CD8-positive, alpha-beta memory T cell (primary cell): ENCODE measurements at regions of chr14 and their contacts with region 1.

Region 1: GRCh38 chr14:99192028-99192621 is 79.9 kb downstream of the BCL11B start:
- DNase-seq: peak in 2 of 5 donors; percentile 59 to 60
- H3K4me3 ChIP-seq: peak overlapping the region; percentile 63
- H3K4me3 Mint-ChIP-seq: peak overlapping the region; percentile 83 to 95 (median 88)
- H3K27ac ChIP-seq: peak overlapping the region; percentile 68
- H3K27ac Mint-ChIP-seq: peak overlapping the region; percentile 94 to 98 (median 96)
- H3K4me1 ChIP-seq: peaks cover 97% of the 10 kb centered on the region
- H3K4me1 Mint-ChIP-seq: peaks cover 93 to 100% (median 98%) of the 10 kb centered on the region in 3 donors
- H3K27me3 ChIP-seq: no peaks in the 10 kb centered on the region
- H3K27me3 Mint-ChIP-seq: peaks cover 0 to 9% of the 10 kb centered on the region in 2 donors

Region 2: DNA sequence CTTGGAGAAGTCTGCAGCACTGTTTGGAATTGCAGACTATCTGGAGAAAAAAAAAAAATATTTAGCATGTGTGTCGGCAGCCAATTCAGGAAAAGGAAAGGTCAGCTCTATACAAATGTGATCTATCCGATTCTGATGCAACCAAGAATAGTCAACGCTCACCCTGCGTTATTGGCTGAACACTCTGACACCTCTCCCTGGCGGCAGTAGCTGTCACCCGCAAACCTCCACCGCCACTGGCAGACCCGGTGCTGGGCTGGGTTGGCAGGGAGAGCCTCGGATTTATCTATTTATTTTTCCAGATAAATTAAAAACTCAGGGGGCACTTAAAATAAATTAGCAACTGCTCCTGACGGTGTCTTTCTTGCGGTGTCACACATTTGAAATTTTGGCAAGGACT is 1985.2 kb before region 1 on chr14:
- CTCF ChIA-PET with region 1: no interaction called
- POLR2A ChIA-PET with region 1: interaction called, 14 read pairs
- DNase-seq: no peak
- H3K4me3 ChIP-seq: no peak overlapping the region
- H3K4me3 Mint-ChIP-seq: no peak overlapping the region
- H3K27ac ChIP-seq: no peak overlapping the region
- H3K27ac Mint-ChIP-seq: no peak overlapping the region
- H3K4me1 ChIP-seq: no peaks in the 10 kb centered on the region
- H3K4me1 Mint-ChIP-seq: no peaks in the 10 kb centered on the region
- H3K27me3 ChIP-seq: no peaks in the 10 kb centered on the region
- H3K27me3 Mint-ChIP-seq: peaks cover 7 to 25% of the 10 kb centered on the region in 2 donors

Region 3: GRCh38 chr14:98651042-98651441 is 541.1 kb before region 1 on chr14:
- CTCF ChIA-PET with region 1: no interaction called
- POLR2A ChIA-PET with region 1: no interaction called
- DNase-seq: no peak
- H3K4me3 ChIP-seq: no peak overlapping the region
- H3K4me3 Mint-ChIP-seq: no peak overlapping the region
- H3K27ac ChIP-seq: no peak overlapping the region
- H3K27ac Mint-ChIP-seq: no peak overlapping the region
- H3K4me1 ChIP-seq: no peaks in the 10 kb centered on the region
- H3K4me1 Mint-ChIP-seq: no peaks in the 10 kb centered on the region
- H3K27me3 ChIP-seq: no peaks in the 10 kb centered on the region
- H3K27me3 Mint-ChIP-seq: peaks cover 0 to 2% of the 10 kb centered on the region in 2 donors

Region 4: DNA sequence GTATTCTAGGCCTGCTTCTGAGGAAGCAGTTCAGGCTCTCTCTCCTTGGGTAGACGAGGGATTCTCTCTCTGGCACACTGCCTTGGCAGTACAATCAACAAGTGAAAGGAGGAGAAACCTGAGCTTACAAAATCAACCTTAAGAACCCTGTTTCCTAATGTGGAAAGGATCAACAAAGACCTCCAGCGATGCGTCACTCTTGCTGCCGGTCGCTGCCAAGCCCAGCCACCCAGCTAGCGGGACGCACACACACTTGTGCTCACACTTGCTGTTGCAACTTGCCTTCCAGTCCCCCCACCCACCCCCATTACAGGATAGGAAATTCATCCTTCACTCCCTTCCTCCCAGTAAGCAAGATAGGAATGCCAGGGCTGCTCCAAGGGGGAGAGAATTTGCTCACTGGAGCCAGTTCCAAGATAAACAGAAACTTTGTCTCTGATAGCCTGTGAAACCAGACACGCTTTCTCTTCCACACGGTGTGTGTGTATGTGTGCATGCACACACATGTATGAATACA is 64.4 kb before region 1 on chr14:
- CTCF ChIA-PET with region 1: no interaction called
- POLR2A ChIA-PET with region 1: no interaction called
- DNase-seq: no peak
- H3K4me3 ChIP-seq: no peak overlapping the region
- H3K4me3 Mint-ChIP-seq: no peak overlapping the region
- H3K27ac ChIP-seq: no peak overlapping the region
- H3K27ac Mint-ChIP-seq: no peak overlapping the region
- H3K4me1 ChIP-seq: no peaks in the 10 kb centered on the region
- H3K4me1 Mint-ChIP-seq: peaks cover 16 to 30% (median 28%) of the 10 kb centered on the region in 3 donors
- H3K27me3 ChIP-seq: no peaks in the 10 kb centered on the region
- H3K27me3 Mint-ChIP-seq: peaks cover 0 to 3% of the 10 kb centered on the region in 2 donors